Mammary epithelial cell (primary cell): ENCODE measurements at regions of chrX and their contacts with region 1.

Region 1: GRCh38 chrX:54639346-54640102 is 109.5 kb downstream of the GNL3L start:
- DNase-seq: peak; percentile 92
- H3K4me3 ChIP-seq: peak overlapping the region; percentile 45 to 61 (median 51)
- H3K27ac ChIP-seq: peak overlapping the region; percentile 92
- H3K4me1 ChIP-seq: no peaks in the 10 kb centered on the region
- H3K27me3 ChIP-seq: no peaks in the 10 kb centered on the region
- CTCF ChIP-seq: peak; percentile 50 to 66

Region 2: DNA sequence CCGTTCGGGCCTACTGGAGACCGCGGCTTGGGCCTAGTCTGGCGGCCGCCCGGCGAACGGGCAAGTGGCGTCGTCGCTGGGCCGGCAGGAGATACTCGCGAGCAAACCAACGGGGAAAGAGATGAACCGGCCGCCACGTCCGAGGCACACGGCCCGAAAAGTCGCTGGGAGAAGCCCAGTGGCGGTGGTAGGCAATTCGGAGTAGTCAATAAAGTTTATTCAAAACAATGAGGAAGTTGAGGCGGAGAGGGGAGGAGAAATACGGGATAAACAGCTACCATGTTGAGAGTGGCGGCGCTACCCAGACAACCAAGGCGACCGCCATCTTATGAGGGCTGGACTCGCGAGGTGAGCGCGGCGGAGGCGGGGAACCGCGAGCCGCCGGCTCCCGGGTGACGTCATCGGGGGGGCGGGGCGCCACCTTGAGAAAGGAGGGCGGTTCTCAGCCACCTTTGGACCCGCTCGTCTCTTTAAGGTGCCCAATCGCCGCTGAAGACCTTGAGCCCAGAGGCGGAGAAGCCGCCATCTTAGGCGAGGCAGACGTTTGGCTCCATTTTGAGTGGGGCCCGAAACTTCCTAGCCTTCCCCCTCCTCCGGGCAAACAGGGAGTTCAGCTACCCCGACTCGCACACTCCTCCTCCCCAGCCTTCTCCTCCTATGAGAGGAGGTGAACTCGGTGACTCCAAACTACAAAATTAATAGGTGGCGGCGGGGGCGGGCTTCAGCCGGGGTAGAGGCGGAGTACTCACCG is 595.2 kb before region 1 on chrX and contains the start of gene PHF8:
- CTCF ChIA-PET with region 1: no interaction called
- dilution Hi-C with region 1: no loop called
- in situ Hi-C with region 1: no loop called
- intact Hi-C with region 1: loop called (anchors 5 kb)
- DNase-seq: peak; percentile 94
- H3K4me3 ChIP-seq: peak within 1 kb of the TSS; percentile 59 to 69 (median 63)
- H3K27ac ChIP-seq: peak within 1 kb of the TSS; percentile 73
- H3K4me1 ChIP-seq: peaks cover 8% of the 10 kb centered on the region
- H3K27me3 ChIP-seq: no peaks in the 10 kb centered on the region
- CTCF ChIP-seq: no peak
- total RNA-seq, gene PHF8: 16.0 to 23.8 TPM

Region 3: DNA sequence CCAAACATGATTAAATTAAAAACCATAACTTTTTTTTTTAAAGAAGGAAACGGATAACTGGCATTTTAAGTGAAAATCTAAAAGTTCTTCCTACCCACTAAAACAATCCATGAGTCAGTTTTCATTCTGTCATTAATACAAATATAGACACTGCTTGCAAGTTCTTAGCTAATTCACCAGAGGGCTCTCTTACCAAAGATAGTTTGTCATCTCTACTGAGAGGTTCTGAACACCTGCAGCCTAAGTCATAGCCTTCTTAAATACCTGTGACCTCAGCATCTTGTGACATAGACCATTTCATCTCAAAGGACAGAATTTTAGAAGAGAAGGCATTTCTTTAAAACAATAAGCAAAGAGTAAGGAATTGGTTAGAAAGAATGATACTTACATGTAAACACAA is 391.2 kb before region 1 on chrX:
- CTCF ChIA-PET with region 1: no interaction called
- dilution Hi-C with region 1: no loop called
- in situ Hi-C with region 1: no loop called
- intact Hi-C with region 1: loop called (anchors 1 kb)
- DNase-seq: peak; percentile 28
- H3K4me3 ChIP-seq: no peak overlapping the region
- H3K27ac ChIP-seq: no peak overlapping the region
- H3K4me1 ChIP-seq: no peaks in the 10 kb centered on the region
- H3K27me3 ChIP-seq: no peaks in the 10 kb centered on the region
- CTCF ChIP-seq: peak; percentile 32 to 61

Region 4: GRCh38 chrX:54721424-54721823 is 81.9 kb after region 1 on chrX:
- CTCF ChIA-PET with region 1: no interaction called
- dilution Hi-C with region 1: loop called (anchors 5 kb)
- in situ Hi-C with region 1: no loop called
- intact Hi-C with region 1: no loop called
- DNase-seq: peak; percentile 60
- H3K4me3 ChIP-seq: no peak overlapping the region
- H3K27ac ChIP-seq: no peak overlapping the region
- H3K4me1 ChIP-seq: peaks cover 10% of the 10 kb centered on the region
- H3K27me3 ChIP-seq: no peaks in the 10 kb centered on the region
- CTCF ChIP-seq: no peak

Region 5: GRCh38 chrX:54786962-54787361 is 147.4 kb after region 1 on chrX:
- CTCF ChIA-PET with region 1: no interaction called
- dilution Hi-C with region 1: no loop called
- in situ Hi-C with region 1: no loop called
- intact Hi-C with region 1: loop called (anchors 1 kb)
- DNase-seq: peak; percentile 19
- H3K4me3 ChIP-seq: no peak overlapping the region
- H3K27ac ChIP-seq: no peak overlapping the region
- H3K4me1 ChIP-seq: no peaks in the 10 kb centered on the region
- H3K27me3 ChIP-seq: no peaks in the 10 kb centered on the region
- CTCF ChIP-seq: peak; percentile 29 to 52

Region 6: GRCh38 chrX:55057675-55058249 is 418.2 kb after region 1 on chrX:
- CTCF ChIA-PET with region 1: no interaction called
- dilution Hi-C with region 1: no loop called
- in situ Hi-C with region 1: no loop called
- intact Hi-C with region 1: loop called (anchors 5 kb)
- DNase-seq: peak; percentile 9
- H3K4me3 ChIP-seq: no peak overlapping the region
- H3K27ac ChIP-seq: no peak overlapping the region
- H3K4me1 ChIP-seq: no peaks in the 10 kb centered on the region
- H3K27me3 ChIP-seq: peaks cover 8% of the 10 kb centered on the region
- CTCF ChIP-seq: peak; percentile 82 to 92